Natural killer cell (primary cell): ENCODE measurements at regions of chr5 and their contacts with region 1.

Region 1: GRCh38 chr5:149551200-149552037 is at the start of gene CSNK1A1:
- DNase-seq: peak; percentile 98 to 100
- ATAC-seq: peak; percentile 79 to 92 (median 87)
- H3K4me3 ChIP-seq: peak within 1 kb of the TSS; percentile 60
- H3K4me3 Mint-ChIP-seq: peak within 1 kb of the TSS; percentile 99
- H3K27ac ChIP-seq: peak within 1 kb of the TSS; percentile 88
- H3K27ac Mint-ChIP-seq: peak within 1 kb of the TSS; percentile 99
- H3K4me1 ChIP-seq: peaks cover 22% of the 10 kb centered on the region
- H3K4me1 Mint-ChIP-seq: peaks cover 43 to 46% of the 10 kb centered on the region in 2 donors
- H3K27me3 ChIP-seq: no peaks in the 10 kb centered on the region
- H3K27me3 Mint-ChIP-seq: no peaks in the 10 kb centered on the region
- CTCF ChIP-seq: peak; percentile 52
- total RNA-seq, gene CSNK1A1: 183 to 209 (median 206) TPM

Region 2: GRCh38 chr5:149357370-149358293 is 193.8 kb before region 1 on chr5 and contains the start of gene PCYOX1L:
- intact Hi-C with region 1: loop called (anchors 2 kb)
- DNase-seq: peak; percentile 91 to 97
- ATAC-seq: peak; percentile 97 to 99 (median 98)
- H3K4me3 ChIP-seq: peak within 1 kb of the TSS; percentile 78
- H3K4me3 Mint-ChIP-seq: peak within 1 kb of the TSS; percentile 93
- H3K27ac ChIP-seq: peak within 1 kb of the TSS; percentile 62
- H3K27ac Mint-ChIP-seq: peak within 1 kb of the TSS; percentile 85 to 93
- H3K4me1 ChIP-seq: peaks cover 20% of the 10 kb centered on the region
- H3K4me1 Mint-ChIP-seq: peaks cover 31 to 36% of the 10 kb centered on the region in 2 donors
- H3K27me3 ChIP-seq: no peaks in the 10 kb centered on the region
- H3K27me3 Mint-ChIP-seq: no peaks in the 10 kb centered on the region
- CTCF ChIP-seq: no peak
- total RNA-seq, gene PCYOX1L: 16.6 to 18.1 (median 16.8) TPM

Region 3: DNA sequence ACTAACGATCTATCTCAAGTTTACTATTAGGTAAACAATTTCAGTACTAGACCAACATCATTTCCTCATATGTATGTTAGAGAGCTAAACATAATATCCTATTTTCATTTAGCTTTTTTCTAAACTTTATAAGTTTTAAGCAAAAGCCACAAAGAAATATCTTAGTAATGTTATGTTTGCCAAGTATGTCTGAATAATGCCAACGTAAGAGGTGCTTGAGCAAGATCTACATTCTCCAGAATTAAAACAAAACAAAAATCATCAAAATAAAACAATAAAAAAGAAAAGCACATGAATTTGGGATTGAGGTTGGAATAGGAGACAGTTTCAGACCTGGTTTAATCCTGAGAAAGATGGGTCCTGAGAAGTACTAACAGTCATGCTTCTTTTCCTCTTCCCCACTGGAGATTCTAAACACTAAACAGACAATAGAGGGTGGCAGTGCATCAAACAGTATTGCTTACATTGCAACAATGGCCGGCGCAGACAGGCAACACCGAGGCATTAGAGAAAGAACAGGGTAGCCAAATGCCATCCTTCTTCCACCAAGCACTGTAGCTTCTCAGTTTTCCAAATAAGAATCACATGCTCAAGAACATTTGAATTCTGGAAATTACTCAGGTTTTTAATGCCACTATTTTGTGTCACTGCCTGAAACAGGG is 33.8 kb before region 1 on chr5:
- intact Hi-C with region 1: loop called (anchors 5 kb)
- DNase-seq: no peak
- ATAC-seq: no peak
- H3K4me3 ChIP-seq: no peak overlapping the region
- H3K4me3 Mint-ChIP-seq: peak overlapping the region; percentile 5
- H3K27ac ChIP-seq: no peak overlapping the region
- H3K27ac Mint-ChIP-seq: peak overlapping the region; percentile 77 to 83
- H3K4me1 ChIP-seq: peaks cover 12% of the 10 kb centered on the region
- H3K4me1 Mint-ChIP-seq: peaks cover 78 to 82% of the 10 kb centered on the region in 2 donors
- H3K27me3 ChIP-seq: no peaks in the 10 kb centered on the region
- H3K27me3 Mint-ChIP-seq: no peaks in the 10 kb centered on the region
- CTCF ChIP-seq: no peak

Region 4: GRCh38 chr5:149765932-149766331 is 214.5 kb after region 1 on chr5:
- intact Hi-C with region 1: no loop called
- DNase-seq: peak in 1 of 2 donors; percentile 10
- ATAC-seq: no peak
- H3K4me3 ChIP-seq: no peak overlapping the region
- H3K4me3 Mint-ChIP-seq: no peak overlapping the region
- H3K27ac ChIP-seq: no peak overlapping the region
- H3K27ac Mint-ChIP-seq: no peak overlapping the region
- H3K4me1 ChIP-seq: no peaks in the 10 kb centered on the region
- H3K4me1 Mint-ChIP-seq: no peaks in the 10 kb centered on the region
- H3K27me3 ChIP-seq: no peaks in the 10 kb centered on the region
- H3K27me3 Mint-ChIP-seq: no peaks in the 10 kb centered on the region
- CTCF ChIP-seq: no peak